Activated CD8-positive, alpha-beta T cell treated with anti-CD3 and anti-CD28 coated beads, Interleukin-2, amount 10 ng/mL, durations not matched to agents 7 days and 5 days (primary cell): ENCODE measurements at regions of chr20 and their contacts with region 1.

Region 1: GRCh38 chr20:46363800-46364634 is 42.4 kb downstream of the ELMO2 start:
- DNase-seq: peak; percentile 91
- ATAC-seq: peak; percentile 83
- H3K4me3 Mint-ChIP-seq: peak overlapping the region; percentile 84
- H3K27ac Mint-ChIP-seq: peak overlapping the region; percentile 88
- H3K4me1 Mint-ChIP-seq: peaks cover 72% of the 10 kb centered on the region
- H3K27me3 Mint-ChIP-seq: no peaks in the 10 kb centered on the region

Region 2: DNA sequence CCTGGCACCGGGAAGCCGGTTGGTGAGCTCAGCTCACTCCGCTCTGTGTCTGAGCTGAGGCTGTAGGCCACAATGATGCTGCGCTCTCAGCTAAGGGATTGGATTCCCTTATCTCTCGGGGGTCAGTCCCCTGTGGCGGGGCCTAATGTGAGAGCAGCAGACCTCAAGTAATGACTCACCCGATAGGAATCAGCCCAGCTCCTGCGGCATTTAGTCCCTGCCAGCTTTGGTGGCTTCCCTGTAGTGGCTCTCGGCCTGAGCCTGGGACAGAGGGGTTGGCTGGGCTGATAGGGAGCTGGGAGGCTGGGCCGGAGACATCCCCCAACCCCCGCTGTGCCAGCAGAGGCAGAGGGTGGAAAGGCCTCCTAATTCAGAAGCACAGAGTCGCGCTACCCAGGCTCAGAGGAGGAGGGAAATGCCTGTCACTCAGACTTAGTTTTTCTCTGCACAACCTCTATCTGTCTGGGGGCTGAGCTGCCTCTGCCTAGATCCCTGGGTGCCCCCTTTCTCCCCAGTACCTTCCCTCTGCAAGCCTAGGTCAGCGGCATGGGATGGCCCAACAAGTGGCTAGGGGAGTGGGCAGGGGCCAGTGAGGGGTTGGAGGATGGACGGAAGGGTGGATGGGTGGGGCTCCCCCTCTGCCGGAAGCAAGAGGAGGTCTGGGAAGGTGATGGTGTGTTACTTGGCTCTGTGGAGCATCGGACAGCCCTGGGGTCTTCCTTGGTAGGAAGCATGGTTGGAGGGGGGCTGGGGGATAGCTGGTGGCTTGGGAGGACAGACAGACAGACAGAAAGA is 147.9 kb before region 1 on chr20:
- CTCF ChIA-PET with region 1: no interaction called
- POLR2A ChIA-PET with region 1: no interaction called
- DNase-seq: no peak
- ATAC-seq: no peak
- H3K4me3 Mint-ChIP-seq: no peak overlapping the region
- H3K27ac Mint-ChIP-seq: no peak overlapping the region
- H3K4me1 Mint-ChIP-seq: no peaks in the 10 kb centered on the region
- H3K27me3 Mint-ChIP-seq: no peaks in the 10 kb centered on the region

Region 3: DNA sequence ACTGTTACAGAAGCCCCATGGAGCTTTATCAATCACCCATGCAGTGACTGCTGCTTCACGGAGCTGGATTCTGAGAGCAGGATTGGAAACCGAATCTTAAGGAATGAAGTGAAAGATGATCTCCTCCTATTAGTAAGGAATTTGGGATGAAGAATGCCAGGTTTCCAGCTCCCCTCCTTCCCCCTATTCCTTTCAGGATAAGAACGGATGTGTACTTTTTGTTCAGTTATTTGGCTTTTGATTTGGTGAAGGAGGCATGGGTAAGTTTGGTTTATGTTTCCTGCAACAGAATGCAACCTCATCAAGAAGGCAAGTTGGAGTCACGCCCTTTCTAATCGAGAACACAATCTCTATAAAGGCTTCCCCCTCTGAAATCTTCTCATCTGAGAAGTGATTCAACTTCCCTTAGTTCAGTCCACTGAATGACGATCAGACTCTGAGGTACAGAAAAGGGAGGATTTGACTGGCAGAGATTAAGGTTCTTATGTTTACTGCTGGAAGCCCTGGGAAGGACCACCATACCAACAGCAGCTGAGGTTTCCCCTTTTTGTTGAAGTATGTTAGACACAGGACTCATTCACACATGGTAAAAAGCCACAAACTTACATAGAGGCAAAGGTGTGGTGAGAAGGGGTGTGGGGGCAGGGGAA is 36.9 kb after region 1 on chr20:
- CTCF ChIA-PET with region 1: interaction called, 12 read pairs
- POLR2A ChIA-PET with region 1: interaction called, 76 read pairs
- DNase-seq: peak; percentile 60
- ATAC-seq: peak; percentile 69
- H3K4me3 Mint-ChIP-seq: peak overlapping the region; percentile 69
- H3K27ac Mint-ChIP-seq: peak overlapping the region; percentile 90
- H3K4me1 Mint-ChIP-seq: peaks cover 68% of the 10 kb centered on the region
- H3K27me3 Mint-ChIP-seq: no peaks in the 10 kb centered on the region